Activated CD4-positive, alpha-beta memory T cell treated with anti-CD3 and anti-CD28 coated beads for 36 hours (primary cell): ENCODE measurements at regions of chr13 and their contacts with region 1.

Region 1: DNA sequence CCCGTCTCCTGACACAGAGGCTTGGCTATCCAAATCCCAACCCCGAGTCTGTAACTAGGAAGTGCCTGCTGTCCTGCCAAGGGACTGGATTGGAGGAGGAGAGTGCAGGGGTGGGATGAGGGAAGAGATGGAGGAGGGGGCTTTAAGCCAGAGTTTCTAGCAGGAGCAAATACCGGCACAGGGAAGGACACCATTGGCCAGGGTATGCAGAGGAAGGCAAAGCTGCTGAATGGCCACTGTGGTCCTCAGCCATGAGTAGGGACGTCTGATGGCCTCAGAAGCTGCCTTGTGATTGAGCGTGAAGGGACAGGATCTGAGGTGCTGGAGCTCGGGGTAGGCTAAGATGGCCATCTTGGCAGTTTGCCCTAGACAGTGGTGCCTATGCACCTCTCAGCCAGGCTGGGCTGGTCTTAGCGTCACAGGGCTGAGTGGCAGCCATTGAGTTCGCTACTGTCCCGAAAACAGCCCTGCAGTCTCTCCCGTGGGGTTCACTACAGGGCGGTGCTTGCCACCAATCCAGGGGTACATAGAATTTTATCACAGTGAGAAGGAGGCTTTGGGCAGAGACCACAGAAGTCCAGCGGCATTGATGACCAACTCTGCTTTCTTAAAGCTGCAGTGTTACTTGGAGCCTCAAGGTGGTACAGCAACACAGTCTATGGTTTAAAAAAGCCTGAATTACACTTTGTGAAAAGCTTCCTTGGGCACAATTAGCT is 61.8 kb downstream of the AKAP11 start:
- DNase-seq: no peak
- H3K4me3 Mint-ChIP-seq: no peak overlapping the region
- H3K27ac Mint-ChIP-seq: peak overlapping the region; percentile 64
- H3K4me1 Mint-ChIP-seq: peaks cover 32% of the 10 kb centered on the region
- H3K27me3 Mint-ChIP-seq: no peaks in the 10 kb centered on the region

Region 2: GRCh38 chr13:42377640-42378382 is 44.0 kb after region 1 on chr13:
- CTCF ChIA-PET with region 1: interaction called, 3 read pairs
- POLR2A ChIA-PET with region 1: no interaction called
- intact Hi-C with region 1: loop called (anchors 1 kb)
- DNase-seq: peak; percentile 61
- H3K4me3 Mint-ChIP-seq: peak overlapping the region; percentile 30
- H3K27ac Mint-ChIP-seq: peak overlapping the region; percentile 92
- H3K4me1 Mint-ChIP-seq: peaks cover 61% of the 10 kb centered on the region
- H3K27me3 Mint-ChIP-seq: no peaks in the 10 kb centered on the region

Region 3: DNA sequence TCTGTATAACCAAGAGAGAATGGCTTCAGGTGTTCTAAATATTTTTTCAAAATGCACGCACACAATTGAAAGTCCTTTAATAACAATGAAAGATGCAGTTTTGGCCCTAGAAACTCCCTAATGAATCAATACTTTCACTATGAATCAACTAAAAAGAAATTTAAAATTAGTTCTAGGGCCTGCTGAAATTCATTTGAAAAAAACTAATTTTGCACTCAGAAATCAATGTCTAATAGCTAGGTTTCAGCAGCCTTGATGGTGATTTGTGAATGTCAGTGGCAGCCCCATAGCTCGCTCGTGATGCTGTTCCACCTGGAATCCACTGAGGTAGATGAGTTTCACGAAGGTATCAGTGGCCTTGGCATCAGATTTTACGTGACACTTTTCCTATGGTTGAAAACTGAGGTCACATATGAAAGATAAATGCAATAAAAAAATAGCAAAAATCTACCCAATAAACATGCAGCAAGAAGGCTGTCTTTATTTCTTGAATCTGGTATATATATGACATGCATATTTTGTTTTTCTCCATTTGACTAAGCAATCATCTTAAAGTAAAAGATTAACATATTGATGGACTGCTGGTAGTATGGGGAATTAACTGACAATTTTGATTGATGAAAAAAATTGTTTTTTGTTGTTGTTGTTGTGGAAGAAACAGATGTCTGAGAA is 79.2 kb after region 1 on chr13:
- CTCF ChIA-PET with region 1: interaction called, 11 read pairs
- POLR2A ChIA-PET with region 1: no interaction called
- intact Hi-C with region 1: no loop called
- DNase-seq: no peak
- H3K4me3 Mint-ChIP-seq: no peak overlapping the region
- H3K27ac Mint-ChIP-seq: no peak overlapping the region
- H3K4me1 Mint-ChIP-seq: peaks cover 42% of the 10 kb centered on the region
- H3K27me3 Mint-ChIP-seq: no peaks in the 10 kb centered on the region

Region 4: DNA sequence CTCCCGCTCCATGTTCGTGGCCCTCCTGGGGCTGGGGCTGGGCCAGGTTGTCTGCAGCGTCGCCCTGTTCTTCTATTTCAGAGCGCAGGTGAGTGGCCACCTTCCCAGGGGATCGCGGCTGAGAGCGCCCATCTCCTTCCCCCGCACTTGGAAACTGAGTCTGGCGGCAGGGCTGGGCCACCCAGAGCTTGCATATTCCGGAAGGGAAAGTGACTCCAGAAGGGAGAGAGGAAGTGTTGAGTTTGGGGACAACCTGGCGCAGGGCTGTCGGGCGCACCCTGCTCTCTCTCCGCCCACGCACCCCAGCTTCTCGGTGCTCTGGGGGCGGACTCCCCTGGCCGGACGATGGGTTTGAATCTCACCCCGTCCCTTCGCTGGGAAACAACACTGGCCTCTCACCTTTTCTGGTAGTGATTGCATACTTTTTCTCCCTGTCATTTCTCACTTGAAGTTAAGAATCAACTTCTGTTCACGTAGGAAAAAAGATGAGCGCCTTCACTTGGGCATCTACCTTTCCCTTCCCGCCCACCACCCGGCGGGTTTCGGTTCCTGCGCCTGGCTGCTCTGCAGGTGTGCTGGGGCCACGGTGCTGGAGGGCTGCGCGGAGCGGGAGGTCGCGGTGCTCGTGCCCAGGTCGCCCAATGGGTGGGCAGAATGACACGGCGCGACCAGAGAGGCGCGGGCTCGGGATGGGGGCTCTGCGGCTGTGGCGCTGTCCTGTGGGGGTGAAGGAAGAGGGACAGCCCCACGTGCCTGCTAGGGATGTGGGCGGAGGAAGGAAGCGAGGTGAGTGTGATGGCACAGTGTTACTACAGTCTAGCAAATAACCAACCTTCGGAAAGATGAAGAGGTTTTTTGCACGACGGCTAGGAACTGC is 240.9 kb after region 1 on chr13:
- CTCF ChIA-PET with region 1: no interaction called
- POLR2A ChIA-PET with region 1: no interaction called
- intact Hi-C with region 1: loop called (anchors 5 kb)
- DNase-seq: peak; percentile 75
- H3K4me3 Mint-ChIP-seq: peak overlapping the region; percentile 73
- H3K27ac Mint-ChIP-seq: peak overlapping the region; percentile 55
- H3K4me1 Mint-ChIP-seq: peaks cover 34% of the 10 kb centered on the region
- H3K27me3 Mint-ChIP-seq: peaks cover 26% of the 10 kb centered on the region